AG04450 (cell line): ENCODE measurements at regions of chr1 and their contacts with region 1.

Region 1: DNA sequence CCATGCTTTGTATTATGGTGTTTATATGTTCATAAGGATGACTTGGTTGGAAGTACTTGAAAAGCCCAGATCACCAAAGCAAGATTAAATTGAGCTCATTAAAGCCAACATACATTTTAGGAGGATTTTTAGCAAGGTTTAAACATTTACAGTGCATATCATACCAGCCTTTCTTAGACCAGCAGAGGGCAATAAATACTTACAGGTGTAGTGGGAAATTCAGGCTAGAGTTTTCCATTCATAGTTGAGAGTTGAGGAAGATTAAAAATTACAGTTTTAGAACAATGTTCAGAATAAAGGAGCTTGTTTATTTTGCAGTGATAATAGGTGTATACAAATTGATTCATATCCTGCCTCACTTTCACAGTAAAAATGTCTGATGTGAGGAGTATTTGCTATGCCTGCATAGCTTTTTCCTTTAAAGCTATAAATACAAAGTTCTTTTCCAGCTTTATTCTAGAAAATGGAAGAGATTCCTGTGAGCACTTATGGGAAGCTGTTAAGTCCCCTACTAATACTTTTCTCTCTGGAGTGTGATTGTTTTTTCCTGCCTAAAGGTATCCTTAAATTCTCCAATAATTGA is 35.3 kb downstream of the DTL start:
- DNase-seq: peak; percentile 8
- H3K4me3 ChIP-seq: no peak overlapping the region
- H3K27ac ChIP-seq: no peak overlapping the region
- H3K27me3 ChIP-seq: no peaks in the 10 kb centered on the region
- CTCF ChIP-seq: peak; percentile 79

Region 2: DNA sequence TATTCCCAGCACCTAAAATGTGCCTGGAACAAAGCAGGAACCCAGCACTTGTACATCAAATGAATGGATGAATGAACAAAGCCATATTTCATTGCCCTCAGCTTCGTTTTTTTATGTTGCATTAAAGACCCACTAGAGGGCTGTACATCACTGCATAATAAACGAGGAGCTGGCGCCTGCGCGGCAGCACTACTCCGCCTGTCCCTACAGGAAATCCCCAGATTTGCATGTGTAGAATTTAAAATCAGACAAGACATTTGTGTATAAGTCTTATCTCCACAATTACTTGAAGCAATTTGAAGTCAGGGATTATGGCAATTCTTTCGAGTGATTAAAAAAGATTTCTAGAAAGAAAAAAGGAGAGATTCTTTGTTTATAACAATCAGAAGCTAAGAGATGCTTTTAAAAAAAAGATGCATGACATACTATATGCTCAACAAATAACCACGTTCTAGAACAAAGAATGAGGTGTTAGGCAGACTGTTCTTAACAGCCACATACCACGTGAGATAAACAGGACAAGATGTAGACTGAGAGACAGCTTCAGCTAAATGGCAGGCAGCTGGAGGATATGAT is 390.0 kb before region 1 on chr1:
- CTCF ChIA-PET with region 1: interaction called, 29 read pairs
- POLR2A ChIA-PET with region 1: no interaction called
- DNase-seq: peak; percentile 79
- H3K4me3 ChIP-seq: no peak overlapping the region
- H3K27ac ChIP-seq: no peak overlapping the region
- H3K27me3 ChIP-seq: peaks cover 6% of the 10 kb centered on the region
- CTCF ChIP-seq: peak; percentile 78

Region 3: DNA sequence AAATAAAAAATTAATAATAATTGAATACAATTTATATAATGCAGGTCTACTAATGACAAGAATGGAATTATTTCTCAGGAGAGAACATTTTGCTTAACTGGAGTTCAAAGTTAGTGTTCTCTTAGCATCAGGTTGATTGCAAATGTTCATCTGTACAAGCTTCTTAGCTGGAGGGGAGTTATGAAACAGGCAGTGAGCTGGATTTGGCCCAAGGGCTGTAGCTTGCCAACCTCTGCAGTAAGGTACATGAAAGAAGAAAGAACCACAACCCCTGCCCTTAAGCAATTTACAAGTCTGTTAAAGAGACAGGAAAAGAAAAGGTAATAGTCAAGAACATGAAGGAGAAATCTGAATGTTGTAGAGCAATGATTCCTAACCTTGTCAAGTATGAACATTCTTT is 257.2 kb before region 1 on chr1:
- CTCF ChIA-PET with region 1: no interaction called
- POLR2A ChIA-PET with region 1: no interaction called
- DNase-seq: no peak
- H3K4me3 ChIP-seq: no peak overlapping the region
- H3K27ac ChIP-seq: no peak overlapping the region
- H3K27me3 ChIP-seq: no peaks in the 10 kb centered on the region
- CTCF ChIP-seq: no peak

Region 4: GRCh38 chr1:212089560-212090163 is 18.9 kb after region 1 on chr1:
- CTCF ChIA-PET with region 1: interaction called, 32 read pairs
- POLR2A ChIA-PET with region 1: interaction called, 3 read pairs
- DNase-seq: no peak
- H3K4me3 ChIP-seq: no peak overlapping the region
- H3K27ac ChIP-seq: no peak overlapping the region
- H3K27me3 ChIP-seq: no peaks in the 10 kb centered on the region
- CTCF ChIP-seq: no peak

Region 5: DNA sequence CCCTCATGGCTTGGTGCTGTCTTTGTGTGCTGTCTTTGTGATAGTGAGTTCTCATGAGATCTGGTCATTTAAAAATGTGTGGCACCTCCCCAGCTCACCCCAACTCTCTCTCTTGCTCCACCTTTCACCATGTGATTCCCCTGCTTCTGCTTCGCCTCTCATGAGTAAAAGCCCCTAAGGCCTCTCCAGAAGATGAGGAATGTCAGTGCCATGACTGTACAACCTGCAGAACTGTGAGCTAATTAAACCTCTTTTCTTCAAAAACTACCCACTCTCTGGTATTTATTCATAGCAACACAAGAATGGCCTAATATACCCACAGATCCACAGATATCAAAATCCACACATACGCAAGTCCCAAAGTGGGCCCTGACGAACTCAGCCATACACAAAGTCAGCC is 125.5 kb after region 1 on chr1:
- CTCF ChIA-PET with region 1: no interaction called
- POLR2A ChIA-PET with region 1: no interaction called
- DNase-seq: no peak
- H3K4me3 ChIP-seq: no peak overlapping the region
- H3K27ac ChIP-seq: no peak overlapping the region
- H3K27me3 ChIP-seq: no peaks in the 10 kb centered on the region
- CTCF ChIP-seq: no peak

Region 6: GRCh38 chr1:212218911-212219310 is 148.1 kb after region 1 on chr1:
- CTCF ChIA-PET with region 1: interaction called, 11 read pairs
- POLR2A ChIA-PET with region 1: no interaction called
- DNase-seq: peak; percentile 77
- H3K4me3 ChIP-seq: no peak overlapping the region
- H3K27ac ChIP-seq: no peak overlapping the region
- H3K27me3 ChIP-seq: no peaks in the 10 kb centered on the region
- CTCF ChIP-seq: no peak

Region 7: GRCh38 chr1:212291505-212292134 is 220.8 kb after region 1 on chr1:
- CTCF ChIA-PET with region 1: interaction called, 133 read pairs
- POLR2A ChIA-PET with region 1: no interaction called
- DNase-seq: no peak
- H3K4me3 ChIP-seq: no peak overlapping the region
- H3K27ac ChIP-seq: no peak overlapping the region
- H3K27me3 ChIP-seq: no peaks in the 10 kb centered on the region
- CTCF ChIP-seq: peak; percentile 75

Region 8: DNA sequence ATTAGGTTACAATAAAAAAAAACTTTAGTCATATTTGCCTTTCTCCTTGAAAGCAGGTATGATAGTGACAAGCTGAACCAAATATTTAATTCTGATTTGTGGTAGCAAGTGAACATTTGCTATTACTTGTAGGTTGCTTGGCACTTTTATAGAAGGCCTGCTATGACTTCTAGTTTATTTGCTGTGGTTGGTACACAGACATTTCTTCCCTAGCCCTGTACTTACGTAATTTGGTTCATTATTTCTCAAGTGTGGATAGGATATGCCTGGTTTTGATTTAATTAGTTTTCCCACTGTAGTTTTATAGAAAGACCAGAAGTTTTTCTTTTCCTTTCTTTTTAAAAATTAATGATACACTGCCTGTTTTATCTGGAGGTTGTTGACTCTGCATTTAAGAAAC is 270.3 kb after region 1 on chr1:
- CTCF ChIA-PET with region 1: interaction called, 27 read pairs
- POLR2A ChIA-PET with region 1: no interaction called
- DNase-seq: no peak
- H3K4me3 ChIP-seq: no peak overlapping the region
- H3K27ac ChIP-seq: no peak overlapping the region
- H3K27me3 ChIP-seq: no peaks in the 10 kb centered on the region
- CTCF ChIP-seq: no peak

Region 9: GRCh38 chr1:212368073-212368484 is 297.3 kb after region 1 on chr1:
- CTCF ChIA-PET with region 1: interaction called, 226 read pairs
- POLR2A ChIA-PET with region 1: no interaction called
- DNase-seq: peak; percentile 47
- H3K4me3 ChIP-seq: no peak overlapping the region
- H3K27ac ChIP-seq: no peak overlapping the region
- H3K27me3 ChIP-seq: no peaks in the 10 kb centered on the region
- CTCF ChIP-seq: peak; percentile 95